GM23248 (cell line): ENCODE measurements at regions of chr10 and their contacts with region 1.

Region 1: GRCh38 chr10:119428789-119429188 is 113.7 kb downstream of the RGS10 start:
- DNase-seq: no peak
- H3K4me3 ChIP-seq: no peak overlapping the region
- H3K27ac ChIP-seq: no peak overlapping the region
- H3K4me1 ChIP-seq: no peaks in the 10 kb centered on the region
- H3K27me3 ChIP-seq: no peaks in the 10 kb centered on the region

Region 2: DNA sequence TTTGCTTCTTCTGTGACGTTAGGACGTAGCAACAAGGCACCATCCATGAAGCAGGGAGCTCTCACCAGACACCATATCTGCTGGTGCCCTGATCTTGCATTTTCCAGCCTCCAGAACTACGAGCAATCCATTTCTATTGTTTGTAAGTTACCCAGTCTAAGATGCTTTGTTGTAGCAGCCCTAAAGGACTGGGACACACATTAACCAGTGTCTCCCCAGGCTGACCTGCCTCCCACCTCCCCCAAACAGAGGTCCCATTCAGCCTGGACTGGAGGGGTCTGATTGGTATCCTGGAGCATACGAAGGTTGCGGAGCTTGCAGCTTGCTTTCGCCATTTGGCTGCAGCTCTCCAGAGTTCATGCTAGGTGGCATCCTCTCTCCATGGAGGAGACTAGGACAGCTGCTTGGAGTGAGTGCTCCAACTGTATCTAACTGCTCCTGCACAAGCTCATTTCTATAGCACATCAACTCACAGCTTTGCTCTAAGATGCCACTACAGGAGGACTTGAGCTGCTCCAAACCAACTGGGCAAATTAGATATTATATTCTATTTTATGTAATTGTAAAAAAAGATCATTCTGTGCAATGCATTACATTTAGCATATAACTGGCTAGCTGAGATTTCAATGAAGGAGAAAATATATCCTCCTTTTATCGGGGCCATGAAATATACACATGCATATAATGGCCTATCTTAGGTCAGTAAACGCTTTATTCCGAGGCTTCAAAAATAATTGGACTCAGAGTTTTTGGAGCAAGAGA is 229.4 kb before region 1 on chr10:
- in situ Hi-C with region 1: loop called (anchors 10 kb)
- DNase-seq: peak; percentile 88
- H3K4me3 ChIP-seq: no peak overlapping the region
- H3K27ac ChIP-seq: no peak overlapping the region
- H3K4me1 ChIP-seq: peaks cover 26% of the 10 kb centered on the region
- H3K27me3 ChIP-seq: no peaks in the 10 kb centered on the region

Region 3: DNA sequence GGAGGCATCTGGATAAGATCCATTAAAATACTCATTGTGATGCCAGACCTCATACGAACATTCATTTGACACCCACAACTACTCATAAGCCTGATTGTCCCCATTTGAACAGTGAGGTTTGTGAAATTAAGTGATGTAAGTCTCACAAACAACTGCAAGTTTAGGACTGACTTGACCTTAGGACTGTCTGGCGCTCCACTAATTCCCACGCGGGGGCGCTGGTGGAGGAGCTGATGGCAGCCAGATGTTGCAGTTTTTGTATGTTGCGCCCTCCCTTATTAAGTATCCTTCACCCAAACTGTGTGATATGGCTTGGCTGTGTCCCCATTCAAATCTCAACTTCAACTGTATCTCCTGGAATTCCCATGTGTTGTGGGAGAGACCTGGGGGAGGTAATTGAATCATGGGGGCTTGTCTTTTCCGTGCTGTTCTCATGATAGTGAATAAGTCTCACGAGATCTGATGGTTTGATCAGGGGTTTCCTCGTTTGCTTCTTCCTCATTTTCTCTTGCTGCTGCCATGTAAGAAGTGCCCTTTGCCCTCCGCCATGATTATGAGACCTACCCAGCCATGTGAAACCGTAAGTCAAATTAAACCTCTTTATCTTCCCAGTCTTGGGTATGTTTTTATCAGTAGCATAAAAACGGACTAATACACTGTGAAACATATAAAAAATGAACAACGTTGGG is 188.2 kb after region 1 on chr10:
- in situ Hi-C with region 1: no loop called
- DNase-seq: peak; percentile 62
- H3K4me3 ChIP-seq: no peak overlapping the region
- H3K27ac ChIP-seq: no peak overlapping the region
- H3K4me1 ChIP-seq: peaks cover 15% of the 10 kb centered on the region
- H3K27me3 ChIP-seq: no peaks in the 10 kb centered on the region

Region 4: GRCh38 chr10:119650692-119651513 is 222.1 kb after region 1 on chr10 and contains the start of gene BAG3:
- in situ Hi-C with region 1: no loop called
- DNase-seq: peak; percentile 99
- H3K4me3 ChIP-seq: peak within 1 kb of the TSS; percentile 93
- H3K27ac ChIP-seq: peak within 1 kb of the TSS; percentile 95
- H3K4me1 ChIP-seq: peaks cover 23% of the 10 kb centered on the region
- H3K27me3 ChIP-seq: no peaks in the 10 kb centered on the region
- total RNA-seq, gene BAG3: 18.1 and 20.0 TPM in 2 replicates